CD4-positive, alpha-beta memory T cell (primary cell): ENCODE measurements at regions of chr1 and their contacts with region 1.

Region 1: DNA sequence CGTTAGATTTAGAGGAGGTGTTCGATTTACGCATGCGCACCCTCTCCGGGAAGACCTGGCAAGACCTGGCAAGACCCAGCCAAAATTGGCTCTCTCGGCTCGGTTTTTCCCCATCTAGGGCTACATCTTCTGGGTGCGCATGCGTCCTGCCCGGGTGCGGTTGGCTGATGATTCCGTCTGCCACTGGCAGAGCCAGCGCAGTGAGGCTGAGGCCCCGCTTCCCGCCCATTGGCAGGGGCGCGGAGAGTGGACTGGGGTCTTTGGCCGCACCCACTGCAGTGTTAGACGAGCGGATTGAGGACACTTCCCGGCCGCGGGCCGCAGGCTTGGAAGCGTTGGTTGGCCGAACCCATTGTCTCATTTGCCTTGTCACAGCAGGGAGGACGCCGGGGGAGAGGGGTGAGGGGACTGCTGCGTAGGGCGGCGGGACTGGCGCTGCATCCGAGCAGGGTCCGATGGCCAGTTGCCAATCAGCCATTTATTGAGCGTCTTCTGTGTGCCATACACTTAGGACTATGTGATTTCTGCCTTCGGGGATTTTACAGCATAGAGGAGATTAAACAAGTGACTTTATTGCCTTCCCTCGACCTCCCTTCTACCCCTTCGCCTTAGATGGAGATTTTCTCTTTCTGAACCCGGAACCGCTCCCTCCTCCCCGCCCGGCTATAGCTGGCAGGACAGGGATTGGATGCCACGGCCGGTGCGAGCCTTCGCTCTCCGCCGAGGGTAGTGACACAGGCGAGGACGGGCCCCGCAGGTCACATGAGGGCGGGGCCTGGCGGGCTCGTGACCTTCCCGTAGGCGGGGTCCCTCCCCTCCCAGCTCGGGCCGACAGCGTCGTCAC is 43.7 kb downstream of the MEF2D start:
- DNase-seq: peak; percentile 95 to 99 (median 97)
- H3K4me3 ChIP-seq: peak overlapping the region; percentile 61 to 81
- H3K4me3 Mint-ChIP-seq: peak overlapping the region; percentile 92 to 97 (median 94)
- H3K27ac ChIP-seq: peak overlapping the region; percentile 99
- H3K27ac Mint-ChIP-seq: peak overlapping the region; percentile 98 to 100 (median 99)
- H3K4me1 ChIP-seq: peaks cover 17% of the 10 kb centered on the region
- H3K4me1 Mint-ChIP-seq: peaks cover 7 to 26% (median 12%) of the 10 kb centered on the region in 4 donors
- H3K27me3 ChIP-seq: no peaks in the 10 kb centered on the region
- H3K27me3 Mint-ChIP-seq: no peaks in the 10 kb centered on the region

Region 2: DNA sequence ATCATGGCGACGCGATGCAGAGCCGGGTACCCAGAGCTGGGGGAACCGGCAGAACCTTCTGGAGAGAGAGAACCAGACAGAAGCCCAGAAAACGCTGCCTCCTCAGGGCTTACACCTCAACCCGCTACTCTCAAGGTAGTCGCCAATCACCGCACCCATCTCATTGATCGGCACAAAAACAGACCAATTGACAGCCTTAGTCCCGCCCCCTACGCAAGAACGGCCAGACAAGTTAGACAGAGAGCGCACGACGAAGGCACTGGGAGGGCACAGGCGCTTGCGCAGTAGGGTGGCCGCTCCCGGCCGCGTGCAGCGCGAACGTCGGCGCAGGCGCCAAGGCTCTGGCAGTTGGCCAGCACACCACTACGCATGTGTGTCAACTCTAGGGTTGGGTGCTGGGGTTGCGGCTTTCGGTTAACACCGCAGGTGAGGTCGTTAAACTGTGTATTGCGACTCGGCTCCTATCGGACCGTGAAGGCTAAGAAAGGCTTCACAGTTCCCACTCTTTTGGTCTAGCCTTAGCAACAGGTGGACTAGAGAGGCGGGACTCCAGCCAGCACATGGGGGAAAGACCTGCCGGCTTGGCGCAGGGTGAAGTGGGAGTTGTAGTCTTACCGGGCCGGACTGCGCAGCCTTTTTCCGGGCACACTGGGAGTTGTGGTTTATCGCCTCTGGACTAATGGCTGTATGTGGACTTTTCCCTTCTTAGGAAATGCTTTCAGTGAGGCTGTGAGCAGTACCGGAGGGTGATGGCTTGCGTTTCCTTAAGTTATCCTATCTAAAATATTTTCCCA is 118.5 kb before region 1 on chr1 and contains the starts of genes CCT3 and TSACC:
- CTCF ChIA-PET with region 1: no interaction called
- POLR2A ChIA-PET with region 1: no interaction called
- intact Hi-C with region 1: loop called (anchors 1 kb)
- DNase-seq: peak; percentile 100
- H3K4me3 ChIP-seq: peak within 1 kb of the TSS; percentile 94 to 95
- H3K4me3 Mint-ChIP-seq: peak within 1 kb of the TSS; percentile 94 to 99 (median 98)
- H3K27ac ChIP-seq: peak within 1 kb of the TSS; percentile 75
- H3K27ac Mint-ChIP-seq: peak within 1 kb of the TSS; percentile 91 to 100 (median 99)
- H3K4me1 ChIP-seq: peaks cover 28% of the 10 kb centered on the region
- H3K4me1 Mint-ChIP-seq: peaks cover 22 to 46% (median 35%) of the 10 kb centered on the region in 4 donors
- H3K27me3 ChIP-seq: no peaks in the 10 kb centered on the region
- H3K27me3 Mint-ChIP-seq: peaks cover 0 to 1% of the 10 kb centered on the region in 2 donors
- total RNA-seq, gene CCT3: 109 TPM
- total RNA-seq, gene TSACC: not detected

Region 3: GRCh38 chr1:156471496-156472490 is 14.9 kb after region 1 on chr1:
- CTCF ChIA-PET with region 1: interaction called, 11 read pairs
- POLR2A ChIA-PET with region 1: interaction called, 4 read pairs
- intact Hi-C with region 1: no loop called
- DNase-seq: no peak
- H3K4me3 ChIP-seq: no peak overlapping the region
- H3K4me3 Mint-ChIP-seq: no peak overlapping the region
- H3K27ac ChIP-seq: no peak overlapping the region
- H3K27ac Mint-ChIP-seq: peak overlapping the region in 5 of 7 donors; percentile 6 to 73 (median 47)
- H3K4me1 ChIP-seq: no peaks in the 10 kb centered on the region
- H3K4me1 Mint-ChIP-seq: peaks cover 0 to 5% (median 2%) of the 10 kb centered on the region in 4 donors
- H3K27me3 ChIP-seq: no peaks in the 10 kb centered on the region
- H3K27me3 Mint-ChIP-seq: no peaks in the 10 kb centered on the region

Region 4: GRCh38 chr1:156571949-156572662 is 115.3 kb after region 1 on chr1 and contains the start of gene IQGAP3:
- CTCF ChIA-PET with region 1: no interaction called
- POLR2A ChIA-PET with region 1: no interaction called
- intact Hi-C with region 1: no loop called
- DNase-seq: peak; percentile 61 to 81 (median 70)
- H3K4me3 ChIP-seq: peak within 1 kb of the TSS in 1 of 2 donors; percentile 13
- H3K4me3 Mint-ChIP-seq: peak within 1 kb of the TSS; percentile 76 to 91 (median 84)
- H3K27ac ChIP-seq: no peak within 1 kb of the TSS
- H3K27ac Mint-ChIP-seq: peak within 1 kb of the TSS in 5 of 7 donors; percentile 4 to 85 (median 43)
- H3K4me1 ChIP-seq: peaks cover 11% of the 10 kb centered on the region
- H3K4me1 Mint-ChIP-seq: peaks cover 3 to 14% (median 11%) of the 10 kb centered on the region in 4 donors
- H3K27me3 ChIP-seq: peaks cover 9% of the 10 kb centered on the region
- H3K27me3 Mint-ChIP-seq: peaks cover 27 to 38% of the 10 kb centered on the region in 2 donors
- total RNA-seq, gene IQGAP3: not detected

Region 5: GRCh38 chr1:156583821-156584622 is 127.2 kb after region 1 on chr1:
- CTCF ChIA-PET with region 1: interaction called, 4 read pairs
- POLR2A ChIA-PET with region 1: interaction called, 5 read pairs
- intact Hi-C with region 1: loop called (anchors 1 kb)
- DNase-seq: peak; percentile 65 to 75 (median 71)
- H3K4me3 ChIP-seq: no peak overlapping the region
- H3K4me3 Mint-ChIP-seq: no peak overlapping the region
- H3K27ac ChIP-seq: no peak overlapping the region
- H3K27ac Mint-ChIP-seq: no peak overlapping the region
- H3K4me1 ChIP-seq: no peaks in the 10 kb centered on the region
- H3K4me1 Mint-ChIP-seq: peaks cover 0 to 2% (median under 1%) of the 10 kb centered on the region in 4 donors
- H3K27me3 ChIP-seq: no peaks in the 10 kb centered on the region
- H3K27me3 Mint-ChIP-seq: peaks cover 0 to 2% of the 10 kb centered on the region in 2 donors

Region 6: DNA sequence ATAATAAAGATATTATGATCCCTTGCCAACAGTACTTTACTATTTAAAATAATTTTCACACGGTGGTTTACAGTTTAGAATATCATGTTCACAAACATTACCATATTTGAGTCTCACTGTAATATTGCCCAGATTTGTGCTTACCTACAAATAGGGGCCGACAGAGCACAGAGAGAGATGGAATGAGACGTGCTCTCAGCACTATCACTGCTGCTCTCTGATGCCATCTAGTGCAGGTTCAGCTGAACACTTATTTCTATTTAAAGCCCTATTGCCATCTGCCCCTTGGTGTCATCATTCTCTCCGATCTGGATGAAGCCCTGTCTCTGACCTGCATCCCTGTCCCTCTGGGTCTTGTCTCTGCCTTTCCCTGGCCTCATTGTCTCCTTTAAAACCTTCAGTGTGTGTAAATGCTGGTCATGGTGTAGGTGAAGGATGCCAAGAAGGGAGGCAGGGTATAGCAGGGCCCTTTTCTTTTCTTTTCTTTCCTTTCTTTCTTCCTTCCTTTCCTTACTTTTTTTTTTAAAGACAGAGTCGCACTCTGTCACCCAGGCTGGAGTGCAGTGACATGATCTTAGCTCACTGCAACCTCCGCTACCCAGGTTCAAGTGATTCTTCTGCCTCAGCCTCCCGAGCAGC is 151.3 kb after region 1 on chr1:
- CTCF ChIA-PET with region 1: interaction called, 7 read pairs
- POLR2A ChIA-PET with region 1: no interaction called
- intact Hi-C with region 1: loop called (anchors 1 kb)
- DNase-seq: peak; percentile 68 to 75 (median 71)
- H3K4me3 ChIP-seq: no peak overlapping the region
- H3K4me3 Mint-ChIP-seq: no peak overlapping the region
- H3K27ac ChIP-seq: no peak overlapping the region
- H3K27ac Mint-ChIP-seq: peak overlapping the region in 2 of 7 donors; percentile 5 to 46
- H3K4me1 ChIP-seq: peaks cover under 1% of the 10 kb centered on the region
- H3K4me1 Mint-ChIP-seq: peaks cover 2 to 9% (median 7%) of the 10 kb centered on the region in 4 donors
- H3K27me3 ChIP-seq: no peaks in the 10 kb centered on the region
- H3K27me3 Mint-ChIP-seq: peaks cover 7% of the 10 kb centered on the region in 2 donors